A673 (cell line): ENCODE measurements at regions of chr15 and their contacts with region 1.

Region 1: GRCh38 chr15:80758130-80758745 is 20.9 kb upstream of the CEMIP start:
- DNase-seq: no peak
- H3K4me3 ChIP-seq: no peak overlapping the region
- H3K27ac ChIP-seq: no peak overlapping the region
- H3K4me1 ChIP-seq: no peaks in the 10 kb centered on the region
- H3K27me3 ChIP-seq: no peaks in the 10 kb centered on the region
- CTCF ChIP-seq: no peak

Region 2: GRCh38 chr15:80288131-80288530 is 470.1 kb before region 1 on chr15:
- CTCF ChIA-PET with region 1: interaction called, 10 read pairs
- POLR2A ChIA-PET with region 1: no interaction called
- intact Hi-C with region 1: no loop called
- DNase-seq: no peak
- H3K4me3 ChIP-seq: no peak overlapping the region
- H3K27ac ChIP-seq: no peak overlapping the region
- H3K4me1 ChIP-seq: no peaks in the 10 kb centered on the region
- H3K27me3 ChIP-seq: peaks cover 20% of the 10 kb centered on the region
- CTCF ChIP-seq: no peak

Region 3: DNA sequence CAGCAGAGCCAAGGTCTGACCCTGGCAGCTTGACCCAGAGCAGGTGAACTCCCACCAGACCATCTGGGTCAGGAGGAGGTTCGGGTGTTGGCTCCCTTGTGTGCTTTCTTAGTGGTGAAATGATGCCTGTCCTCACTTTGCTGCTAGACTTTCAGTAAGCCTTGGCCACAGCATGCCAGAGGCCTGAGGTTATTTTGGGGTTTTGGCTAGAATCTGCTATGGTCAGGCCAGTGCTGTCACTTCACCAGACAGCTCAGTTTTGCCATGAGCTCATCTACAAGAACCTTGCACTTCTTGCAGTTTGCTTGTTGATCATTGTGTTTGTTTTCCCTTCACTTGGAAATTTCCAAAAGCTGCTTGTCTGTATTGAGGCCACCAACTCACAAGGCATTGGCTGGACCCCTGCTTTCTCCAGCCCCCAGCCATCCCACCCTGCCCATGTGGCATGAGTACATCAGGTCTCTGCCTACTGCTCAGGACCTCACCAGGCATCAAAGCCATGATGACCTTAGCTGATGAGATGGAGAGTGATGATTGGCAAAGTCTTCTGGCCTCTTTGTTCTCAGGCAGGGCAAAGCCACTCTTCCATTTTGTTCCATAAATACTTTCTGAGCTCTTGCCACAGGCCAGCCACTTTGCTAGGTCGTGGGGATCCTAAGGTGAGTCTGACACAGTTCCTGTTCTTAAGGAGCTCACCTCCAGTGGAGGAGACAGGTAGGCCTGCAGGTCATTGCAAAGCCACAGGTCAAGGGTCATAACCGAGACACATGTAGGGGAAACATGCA is 231.5 kb before region 1 on chr15:
- CTCF ChIA-PET with region 1: no interaction called
- POLR2A ChIA-PET with region 1: no interaction called
- intact Hi-C with region 1: no loop called
- DNase-seq: no peak
- H3K4me3 ChIP-seq: no peak overlapping the region
- H3K27ac ChIP-seq: no peak overlapping the region
- H3K4me1 ChIP-seq: no peaks in the 10 kb centered on the region
- H3K27me3 ChIP-seq: no peaks in the 10 kb centered on the region
- CTCF ChIP-seq: no peak

Region 4: DNA sequence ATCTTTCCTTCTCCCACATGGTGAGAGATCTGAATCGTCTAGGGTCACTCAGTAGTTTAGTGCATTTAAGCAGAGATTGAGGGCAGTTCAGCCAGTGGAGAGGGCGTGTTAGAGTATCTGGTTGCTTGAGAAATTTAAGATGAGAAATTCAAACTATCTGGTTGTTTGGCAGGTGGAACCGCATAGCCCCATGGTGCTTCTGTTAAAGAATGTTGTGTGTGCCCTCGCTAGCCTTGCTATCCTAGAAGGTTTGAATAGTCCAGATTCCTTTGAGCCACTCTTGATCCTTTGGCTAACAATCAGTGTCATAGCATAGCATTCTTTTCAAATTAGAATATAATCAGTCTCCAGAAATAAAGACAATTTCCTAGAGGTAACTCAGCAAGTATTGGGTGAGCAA is 31.0 kb before region 1 on chr15:
- CTCF ChIA-PET with region 1: no interaction called
- POLR2A ChIA-PET with region 1: no interaction called
- intact Hi-C with region 1: no loop called
- DNase-seq: no peak
- H3K4me3 ChIP-seq: no peak overlapping the region
- H3K27ac ChIP-seq: no peak overlapping the region
- H3K4me1 ChIP-seq: no peaks in the 10 kb centered on the region
- H3K27me3 ChIP-seq: no peaks in the 10 kb centered on the region
- CTCF ChIP-seq: no peak

Region 5: DNA sequence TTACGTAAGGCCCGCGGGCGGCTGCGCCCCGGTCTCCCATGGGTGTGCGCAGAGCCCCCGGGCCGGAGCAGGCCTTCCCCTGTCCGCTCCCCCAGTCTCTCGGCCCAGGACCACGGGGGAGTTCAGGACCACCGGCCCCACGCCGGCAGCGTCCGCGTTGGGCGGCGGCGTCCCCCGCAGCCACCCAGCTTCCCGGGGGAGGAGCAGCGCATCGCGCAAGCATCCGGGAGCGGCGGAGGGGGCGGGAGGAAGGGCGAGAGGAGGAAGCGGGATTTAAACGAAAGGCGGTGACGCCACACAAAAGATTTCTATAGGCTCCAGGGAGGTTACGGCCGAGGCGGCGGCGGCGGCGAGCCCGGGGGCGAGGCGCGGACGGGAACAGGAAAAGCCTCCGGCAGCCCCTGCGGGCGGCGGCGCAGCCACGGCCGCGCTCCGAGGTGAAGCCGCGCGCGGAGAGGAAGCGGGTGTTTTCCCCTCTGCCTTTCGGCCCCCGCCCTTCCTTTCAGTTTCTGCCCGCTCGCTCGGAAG is 242.4 kb after region 1 on chr15 and contains the start of gene TLNRD1:
- CTCF ChIA-PET with region 1: no interaction called
- POLR2A ChIA-PET with region 1: no interaction called
- intact Hi-C with region 1: no loop called
- DNase-seq: peak; percentile 94
- H3K4me3 ChIP-seq: peak within 1 kb of the TSS; percentile 91
- H3K27ac ChIP-seq: peak within 1 kb of the TSS; percentile 96
- H3K4me1 ChIP-seq: peaks cover 14% of the 10 kb centered on the region
- H3K27me3 ChIP-seq: no peaks in the 10 kb centered on the region
- CTCF ChIP-seq: no peak
- total RNA-seq, gene TLNRD1: 21.0 and 21.8 TPM in 2 replicates